ENCODE measurements at regions of chr19 and their contacts with region 1.

Region 1: GRCh38 chr19:1837625-1838105 is 10.6 kb downstream of the REXO1 start:
- DNase-seq: peak; percentile 71
- H3K4me3 Mint-ChIP-seq: no peak overlapping the region
- H3K27ac Mint-ChIP-seq: no peak overlapping the region
- H3K4me1 Mint-ChIP-seq: peaks cover 35% of the 10 kb centered on the region
- H3K27me3 Mint-ChIP-seq: no peaks in the 10 kb centered on the region

Region 2: DNA sequence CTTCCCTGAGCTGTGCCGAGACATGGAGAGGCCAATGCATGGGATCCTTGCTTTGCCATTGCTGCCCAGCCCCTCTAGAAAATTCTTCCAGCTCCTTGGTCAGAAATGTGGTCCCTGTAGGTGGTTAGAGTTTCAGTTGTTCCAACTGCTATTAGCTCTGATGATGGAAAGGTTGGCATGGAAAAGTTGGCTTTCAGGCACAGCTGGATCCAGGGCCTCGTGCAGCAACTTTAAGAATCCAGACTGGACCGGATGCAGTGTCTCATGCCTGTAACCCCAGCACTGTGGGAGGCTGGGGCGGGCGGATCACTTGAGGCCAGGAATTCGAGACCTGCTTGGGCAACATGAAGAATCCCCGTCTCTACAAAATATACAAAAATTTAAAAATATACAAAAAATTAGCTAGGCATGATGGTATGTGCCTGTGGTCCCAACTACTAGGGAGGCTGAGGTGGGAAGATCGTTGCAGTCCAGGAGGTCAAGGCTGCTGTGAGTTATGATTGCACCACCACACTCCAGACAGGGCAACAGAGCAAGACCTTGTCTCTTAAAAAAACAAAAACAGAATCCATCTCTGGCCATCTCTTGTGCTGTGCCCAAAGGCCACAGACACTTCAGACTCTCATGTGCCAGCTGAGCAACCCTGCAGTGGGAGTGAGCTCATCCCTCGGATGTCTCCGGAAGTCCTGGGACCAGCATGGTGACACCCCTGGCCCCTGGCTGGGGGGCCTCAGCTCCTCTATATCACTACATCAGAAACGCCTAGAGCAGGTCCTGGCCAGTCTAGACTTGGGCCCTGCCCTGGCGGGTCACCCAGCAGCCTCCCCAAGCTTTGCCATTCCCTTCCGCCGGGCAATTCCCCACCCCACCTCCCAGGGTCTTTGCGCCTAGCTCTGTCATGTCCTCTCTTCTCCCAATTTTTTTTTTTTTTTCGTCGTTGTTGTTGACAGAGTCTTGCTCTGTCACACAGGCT is 286.3 kb before region 1 on chr19:
- CTCF ChIA-PET with region 1: no interaction called
- intact Hi-C with region 1: no loop called
- DNase-seq: no peak
- H3K4me3 Mint-ChIP-seq: no peak overlapping the region
- H3K27ac Mint-ChIP-seq: no peak overlapping the region
- H3K4me1 Mint-ChIP-seq: no peaks in the 10 kb centered on the region
- H3K27me3 Mint-ChIP-seq: peaks cover 12% of the 10 kb centered on the region

Region 3: DNA sequence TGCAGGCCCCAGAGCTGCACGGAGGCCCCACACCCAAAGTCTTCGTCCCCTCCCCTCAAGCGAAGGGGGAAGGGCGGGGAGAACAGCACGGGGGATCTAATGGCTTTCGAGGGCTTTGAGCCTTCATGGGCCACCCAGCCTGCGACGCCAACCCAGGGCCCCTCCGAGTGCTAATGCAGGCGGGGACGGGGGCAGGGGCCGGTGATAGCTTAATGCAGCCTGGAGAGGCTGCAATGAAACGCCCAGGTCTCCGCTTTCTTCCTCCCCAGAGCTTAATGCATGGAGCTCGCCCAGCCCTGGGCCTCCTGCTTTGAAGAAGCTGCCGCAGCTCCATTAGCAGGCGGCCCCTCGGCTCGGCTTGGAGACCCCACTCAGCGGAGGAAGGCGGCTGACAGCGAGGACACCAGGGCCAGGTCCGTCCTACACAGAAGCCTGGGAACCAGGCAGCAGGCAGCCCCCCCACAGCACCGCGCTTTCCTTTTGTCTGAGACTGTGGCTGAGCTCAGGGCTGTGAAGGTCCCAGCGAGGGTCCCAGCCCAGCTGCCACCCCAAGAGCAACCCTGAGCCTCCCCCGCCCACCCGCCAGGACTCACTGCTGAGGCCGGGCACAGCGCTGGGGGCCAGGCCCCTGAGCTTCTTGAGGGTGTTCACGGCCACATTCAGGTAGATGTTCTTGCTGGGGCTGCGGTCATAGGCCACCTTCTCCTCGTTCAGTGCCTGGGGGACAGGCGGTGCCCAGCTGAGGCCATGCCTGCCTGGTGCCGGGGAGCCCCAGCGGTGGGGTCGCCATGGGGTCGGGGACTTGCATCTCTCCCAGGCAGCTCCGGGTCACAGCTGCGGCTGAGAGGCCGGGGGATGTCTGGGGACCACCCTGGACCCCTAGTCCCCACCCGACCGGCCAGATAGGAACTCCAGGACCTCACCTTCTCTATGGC is 18.1 kb before region 1 on chr19:
- CTCF ChIA-PET with region 1: interaction called, 10 read pairs
- intact Hi-C with region 1: no loop called
- DNase-seq: no peak
- H3K4me3 Mint-ChIP-seq: no peak overlapping the region
- H3K27ac Mint-ChIP-seq: no peak overlapping the region
- H3K4me1 Mint-ChIP-seq: no peaks in the 10 kb centered on the region
- H3K27me3 Mint-ChIP-seq: no peaks in the 10 kb centered on the region

Region 4: GRCh38 chr19:1848399-1849131 is 10.9 kb after region 1 on chr19 and contains the start of gene REXO1:
- CTCF ChIA-PET with region 1: interaction called, 15 read pairs
- intact Hi-C with region 1: no loop called
- DNase-seq: peak; percentile 99
- H3K4me3 Mint-ChIP-seq: peak within 1 kb of the TSS; percentile 86
- H3K27ac Mint-ChIP-seq: peak within 1 kb of the TSS; percentile 89
- H3K4me1 Mint-ChIP-seq: peaks cover 66% of the 10 kb centered on the region
- H3K27me3 Mint-ChIP-seq: no peaks in the 10 kb centered on the region
- total RNA-seq, gene REXO1: 39.8 to 47.6 TPM